Activated CD4-positive, alpha-beta T cell treated with anti-CD3 and anti-CD28 coated beads, Interleukin-2, amount 10 ng/mL, durations not matched to agents 24 days and 14 days (primary cell): ENCODE measurements at regions of chr15 and their contacts with region 1.

Region 1: GRCh38 chr15:63752075-63752684 is 81.6 kb downstream of the HERC1 start:
- DNase-seq: peak; percentile 85
- H3K4me3 Mint-ChIP-seq: no peak overlapping the region
- H3K27ac Mint-ChIP-seq: peak overlapping the region; percentile 44
- H3K4me1 Mint-ChIP-seq: peaks cover 8% of the 10 kb centered on the region
- H3K27me3 Mint-ChIP-seq: no peaks in the 10 kb centered on the region

Region 2: DNA sequence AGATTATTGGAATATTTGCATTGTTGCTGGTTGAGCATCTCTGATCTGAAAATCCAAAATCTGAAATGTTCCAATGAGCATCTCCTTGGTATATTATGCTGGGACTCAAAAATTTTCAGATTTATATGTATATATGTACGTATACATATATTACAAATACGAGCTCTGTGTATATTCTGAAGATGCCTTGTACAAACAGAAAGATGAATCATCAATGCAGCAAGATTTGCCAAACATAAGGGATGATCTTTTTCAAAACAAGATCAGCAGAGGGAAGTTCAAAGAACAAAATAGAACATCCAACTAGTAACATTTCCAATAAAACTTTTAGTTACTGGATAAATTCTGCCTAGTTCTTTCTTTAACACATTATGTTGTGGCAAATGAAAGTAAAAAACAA is 39.0 kb after region 1 on chr15:
- intact Hi-C with region 1: no loop called
- DNase-seq: no peak
- H3K4me3 Mint-ChIP-seq: no peak overlapping the region
- H3K27ac Mint-ChIP-seq: no peak overlapping the region
- H3K4me1 Mint-ChIP-seq: peaks cover 12% of the 10 kb centered on the region
- H3K27me3 Mint-ChIP-seq: no peaks in the 10 kb centered on the region

Region 3: DNA sequence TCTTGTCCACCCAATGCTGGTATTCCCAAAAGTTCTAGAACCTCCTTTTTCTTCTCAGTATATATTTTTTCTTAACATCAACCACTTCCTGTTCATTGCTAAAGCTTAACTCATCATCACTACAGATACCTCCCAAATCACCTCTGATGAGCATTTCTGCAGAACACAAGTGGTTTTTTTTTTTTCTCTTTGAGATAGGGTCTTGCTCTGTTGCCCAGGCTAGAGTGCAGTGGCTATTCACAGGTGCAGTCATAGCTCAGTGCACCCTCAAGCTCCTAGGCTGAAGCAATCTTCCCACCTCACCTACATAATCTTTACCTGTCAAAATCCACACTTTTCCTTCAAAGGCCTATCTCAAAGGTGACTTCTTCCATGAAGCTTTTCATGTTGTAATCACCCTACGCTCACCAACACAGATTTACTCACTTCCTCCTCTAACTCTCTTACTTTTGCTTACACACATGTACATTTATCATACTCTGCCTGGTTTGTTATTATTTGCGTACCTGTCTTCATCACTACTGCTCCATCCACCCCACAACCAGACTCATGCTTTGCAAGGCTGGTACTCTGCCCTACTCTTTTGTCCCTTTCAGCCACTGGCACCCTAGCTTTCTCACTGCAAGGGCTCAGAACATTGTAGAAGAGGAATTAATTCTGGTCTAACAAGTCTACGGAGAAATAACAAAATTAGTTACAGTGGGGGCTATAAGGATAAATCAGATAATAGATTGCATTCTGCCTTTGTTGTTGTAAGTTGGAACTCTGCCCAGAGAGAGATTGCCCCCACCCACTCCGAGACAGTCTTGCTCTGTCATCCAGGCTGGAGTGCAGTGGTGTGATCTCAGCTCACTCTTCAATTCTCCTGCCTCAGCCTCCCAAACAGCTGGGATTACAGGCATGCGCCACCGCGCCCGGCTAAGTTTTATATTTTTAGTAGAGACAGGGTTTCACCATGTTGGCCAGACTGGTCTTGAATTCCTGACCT is 54.1 kb after region 1 on chr15:
- intact Hi-C with region 1: loop called (anchors 10 kb)
- DNase-seq: peak; percentile 61
- H3K4me3 Mint-ChIP-seq: peak overlapping the region; percentile 22
- H3K27ac Mint-ChIP-seq: peak overlapping the region; percentile 72
- H3K4me1 Mint-ChIP-seq: peaks cover 42% of the 10 kb centered on the region
- H3K27me3 Mint-ChIP-seq: no peaks in the 10 kb centered on the region

Region 4: GRCh38 chr15:63833021-63833696 is 81.0 kb after region 1 on chr15:
- intact Hi-C with region 1: loop called (anchors 5 kb)
- DNase-seq: peak; percentile 84
- H3K4me3 Mint-ChIP-seq: peak overlapping the region; percentile 99
- H3K27ac Mint-ChIP-seq: peak overlapping the region; percentile 100
- H3K4me1 Mint-ChIP-seq: peaks cover 46% of the 10 kb centered on the region
- H3K27me3 Mint-ChIP-seq: peaks cover 6% of the 10 kb centered on the region

Region 5: GRCh38 chr15:63939531-63940130 is 187.5 kb after region 1 on chr15:
- intact Hi-C with region 1: loop called (anchors 5 kb)
- DNase-seq: peak; percentile 77
- H3K4me3 Mint-ChIP-seq: peak overlapping the region; percentile 68
- H3K27ac Mint-ChIP-seq: peak overlapping the region; percentile 86
- H3K4me1 Mint-ChIP-seq: peaks cover 40% of the 10 kb centered on the region
- H3K27me3 Mint-ChIP-seq: no peaks in the 10 kb centered on the region